Mucosa of descending colon (tissue), 3 donors: ENCODE measurements at regions of chr6 and their contacts with region 1.

Region 1: DNA sequence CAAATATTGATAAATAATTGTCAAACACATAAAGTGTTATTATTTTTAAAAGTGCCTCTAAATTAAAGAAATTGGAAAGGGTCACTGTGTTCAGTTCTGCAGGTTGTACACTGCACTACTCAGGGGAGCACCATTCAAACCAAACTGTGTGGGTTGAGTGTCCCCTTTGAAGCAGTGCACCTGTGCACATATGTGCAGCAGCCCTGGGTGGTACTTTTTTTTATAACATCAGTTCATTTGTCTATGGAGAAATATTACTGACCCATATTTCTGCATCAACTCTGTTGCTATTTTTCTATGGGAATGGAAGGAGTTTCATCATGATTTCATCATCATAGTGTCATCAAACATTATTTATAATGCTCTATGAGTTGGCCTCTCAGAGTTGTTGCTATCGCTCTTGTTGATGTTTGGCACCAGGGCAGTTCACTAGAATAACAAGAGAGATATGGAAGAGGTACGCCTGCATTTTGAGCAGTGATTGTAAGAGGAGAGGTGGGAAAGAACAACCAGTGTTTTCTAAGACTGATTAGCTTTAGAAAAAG is 457.6 kb downstream of the TFAP2A start:
- DNase-seq: no peak
- ATAC-seq: no peak
- H3K4me3 ChIP-seq: no peak overlapping the region
- H3K4me1 ChIP-seq: no peaks in the 10 kb centered on the region
- CTCF ChIP-seq: no peak

Region 2: DNA sequence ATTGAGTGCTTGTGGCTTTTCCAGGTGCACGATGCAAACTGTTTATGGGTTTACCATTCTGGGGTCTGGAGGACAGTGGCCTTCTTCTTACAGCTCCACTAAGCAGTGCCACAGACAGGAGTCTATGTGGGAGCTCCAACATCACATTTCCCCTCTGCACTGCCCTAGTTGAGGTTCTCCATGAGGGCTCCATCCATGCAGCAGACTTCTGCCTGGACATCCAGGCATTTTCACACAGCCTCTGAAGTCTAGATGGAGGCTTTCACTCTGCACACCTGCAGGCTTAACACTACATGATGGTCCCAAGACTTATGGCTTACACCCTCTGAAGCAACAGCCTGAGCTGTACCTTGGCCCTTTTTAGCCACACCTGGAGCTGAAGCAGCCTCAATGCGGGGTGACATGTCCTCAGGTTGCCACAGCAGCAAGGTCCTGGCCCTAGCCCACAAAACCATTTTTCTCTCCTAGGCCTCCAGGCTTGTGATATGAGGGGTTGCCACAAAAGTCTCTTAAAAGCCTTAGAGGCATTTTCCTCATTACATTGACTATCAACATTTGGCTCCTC is 94.6 kb before region 1 on chr6:
- intact Hi-C with region 1: no loop called
- DNase-seq: no peak
- ATAC-seq: no peak
- H3K4me3 ChIP-seq: no peak overlapping the region
- H3K4me1 ChIP-seq: no peaks in the 10 kb centered on the region
- CTCF ChIP-seq: no peak

Region 3: GRCh38 chr6:10230559-10230958 is 273.3 kb after region 1 on chr6:
- intact Hi-C with region 1: loop called in 1 of 2 experiments (anchors 5 kb)
- DNase-seq: no peak
- ATAC-seq: no peak
- H3K4me3 ChIP-seq: no peak overlapping the region
- H3K4me1 ChIP-seq: no peaks in the 10 kb centered on the region
- CTCF ChIP-seq: no peak